H1 (cell line): ENCODE measurements at regions of chr3 and their contacts with region 1.

Region 1: GRCh38 chr3:21752749-21753347 is 1.8 kb upstream of the ZNF385D start:
- DNase-seq: no peak
- H3K4me3 ChIP-seq: no peak overlapping the region
- H3K27ac ChIP-seq: no peak overlapping the region
- H3K4me1 ChIP-seq: peaks cover 0 to 10% (median 3%) of the 10 kb centered on the region in 4 experiments; a peak in 3 of 7 replicates
- H3K27me3 ChIP-seq: no peaks in the 10 kb centered on the region; a peak in 1 of 7 replicates
- CTCF ChIP-seq: peak in 2 of 3 experiments; percentile 60 to 82; a peak in 3 of 4 replicates
- EP300 ChIP-seq: no peak
- POLR2A ChIP-seq: no peak
- RAD21 ChIP-seq: peak; percentile 83 to 84

Region 2: DNA sequence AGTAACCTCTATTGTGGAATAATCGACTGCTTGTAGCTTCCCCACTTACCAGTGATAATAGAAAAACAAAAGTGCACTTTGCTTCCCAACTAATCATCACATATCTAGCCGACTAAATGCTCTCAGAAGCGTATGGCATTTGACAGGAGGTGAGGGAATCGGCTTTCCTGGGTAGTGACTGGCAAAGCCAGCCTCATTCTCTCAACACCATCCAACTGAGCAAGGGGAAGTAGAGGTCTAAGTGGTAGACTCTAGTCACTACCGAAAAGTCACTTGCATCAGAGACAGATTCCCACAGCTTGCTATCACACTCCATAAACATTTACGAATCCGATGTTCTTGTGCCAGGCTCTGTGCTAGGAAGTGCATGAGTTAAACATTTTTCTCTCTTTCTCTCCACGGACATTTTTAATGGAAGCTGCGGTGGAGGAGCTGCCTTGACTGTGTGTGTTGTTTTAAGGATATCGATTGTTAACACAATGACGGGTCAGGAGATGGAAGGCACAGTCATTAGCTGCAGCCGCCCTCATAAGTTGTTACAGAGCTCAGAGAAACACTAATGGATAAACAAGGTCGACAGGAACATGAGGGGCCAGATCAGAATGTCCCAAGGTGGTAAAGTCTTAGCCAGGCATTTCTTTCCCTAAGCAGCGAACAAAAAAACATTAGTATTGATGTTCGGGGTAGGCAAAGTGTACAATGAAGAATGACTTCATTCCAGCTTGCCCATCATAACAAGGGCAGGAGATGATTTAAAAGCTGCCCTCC is 13.7 kb before region 1 on chr3:
- CTCF ChIA-PET with region 1: interaction called, 15 read pairs
- POLR2A ChIA-PET with region 1: interaction called, 3 read pairs
- DNase-seq: no peak
- H3K4me3 ChIP-seq: no peak overlapping the region
- H3K27ac ChIP-seq: no peak overlapping the region
- H3K4me1 ChIP-seq: no peaks in the 10 kb centered on the region
- H3K27me3 ChIP-seq: no peaks in the 10 kb centered on the region
- CTCF ChIP-seq: no peak
- EP300 ChIP-seq: no peak
- POLR2A ChIP-seq: no peak
- RAD21 ChIP-seq: no peak

Region 3: GRCh38 chr3:21781355-21781754 is 28.5 kb after region 1 on chr3:
- CTCF ChIA-PET with region 1: no interaction called
- POLR2A ChIA-PET with region 1: no interaction called
- DNase-seq: no peak
- H3K4me3 ChIP-seq: no peak overlapping the region
- H3K27ac ChIP-seq: no peak overlapping the region
- H3K4me1 ChIP-seq: no peaks in the 10 kb centered on the region
- H3K27me3 ChIP-seq: no peaks in the 10 kb centered on the region
- CTCF ChIP-seq: no peak
- EP300 ChIP-seq: no peak
- POLR2A ChIP-seq: no peak
- RAD21 ChIP-seq: no peak